ENCODE measurements at regions of chr6 and their contacts with region 1.

Region 1: GRCh38 chr6:33172688-33173534 is 19.4 kb downstream of the COL11A2 start:
- DNase-seq: peak; percentile 60
- H3K4me3 Mint-ChIP-seq: no peak overlapping the region
- H3K27ac Mint-ChIP-seq: no peak overlapping the region
- H3K4me1 Mint-ChIP-seq: no peaks in the 10 kb centered on the region
- H3K27me3 Mint-ChIP-seq: peaks cover 24% of the 10 kb centered on the region
- CTCF ChIP-seq: peak; percentile 73

Region 2: DNA sequence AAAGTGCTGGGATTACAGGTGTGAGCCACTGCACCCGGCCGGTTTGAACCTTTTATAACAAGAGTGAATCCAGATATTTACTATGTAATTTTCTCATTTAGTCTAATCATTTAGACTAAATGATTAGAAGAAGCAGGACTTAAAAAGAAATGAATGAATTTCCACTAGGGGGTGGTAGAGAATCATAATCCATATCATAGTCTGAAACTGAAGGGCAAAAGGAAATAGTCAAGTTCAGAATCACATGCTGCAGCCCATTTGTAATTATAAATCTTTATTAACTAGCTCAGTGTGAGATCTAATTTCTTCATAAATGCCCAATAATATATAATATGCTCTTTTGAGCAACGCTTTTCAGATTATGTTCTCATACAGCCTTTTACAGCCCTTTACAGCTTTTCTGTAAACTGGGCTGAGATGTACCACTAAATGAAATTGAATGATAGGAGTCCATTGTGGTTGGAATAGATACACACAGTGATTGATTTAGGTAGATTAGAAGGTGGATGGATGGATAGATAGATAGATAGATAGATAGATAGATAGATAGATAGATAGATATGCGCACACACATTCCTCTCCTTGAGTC is 287.1 kb before region 1 on chr6:
- CTCF ChIA-PET with region 1: no interaction called
- POLR2A ChIA-PET with region 1: no interaction called
- intact Hi-C with region 1: no loop called
- DNase-seq: peak; percentile 74
- H3K4me3 Mint-ChIP-seq: no peak overlapping the region
- H3K27ac Mint-ChIP-seq: no peak overlapping the region
- H3K4me1 Mint-ChIP-seq: peaks cover 11% of the 10 kb centered on the region
- H3K27me3 Mint-ChIP-seq: no peaks in the 10 kb centered on the region
- CTCF ChIP-seq: peak; percentile 56

Region 3: GRCh38 chr6:33014841-33015634 is 157.9 kb before region 1 on chr6:
- CTCF ChIA-PET with region 1: interaction called, 5 read pairs
- POLR2A ChIA-PET with region 1: no interaction called
- intact Hi-C with region 1: loop called (anchors 2 kb)
- DNase-seq: peak; percentile 72
- H3K4me3 Mint-ChIP-seq: no peak overlapping the region
- H3K27ac Mint-ChIP-seq: no peak overlapping the region
- H3K4me1 Mint-ChIP-seq: no peaks in the 10 kb centered on the region
- H3K27me3 Mint-ChIP-seq: peaks cover 98% of the 10 kb centered on the region
- CTCF ChIP-seq: peak; percentile 62

Region 4: GRCh38 chr6:33118525-33119123 is 54.3 kb before region 1 on chr6:
- CTCF ChIA-PET with region 1: interaction called, 8 read pairs
- POLR2A ChIA-PET with region 1: no interaction called
- intact Hi-C with region 1: loop called (anchors 2 kb)
- DNase-seq: peak; percentile 62
- H3K4me3 Mint-ChIP-seq: no peak overlapping the region
- H3K27ac Mint-ChIP-seq: no peak overlapping the region
- H3K4me1 Mint-ChIP-seq: no peaks in the 10 kb centered on the region
- H3K27me3 Mint-ChIP-seq: peaks cover 84% of the 10 kb centered on the region
- CTCF ChIP-seq: peak; percentile 53

Region 5: GRCh38 chr6:33161354-33162331 is 11.3 kb before region 1 on chr6:
- CTCF ChIA-PET with region 1: interaction called, 16 read pairs
- POLR2A ChIA-PET with region 1: no interaction called
- intact Hi-C with region 1: no loop called
- DNase-seq: peak; percentile 62
- H3K4me3 Mint-ChIP-seq: peak overlapping the region; percentile 85
- H3K27ac Mint-ChIP-seq: peak overlapping the region; percentile 88
- H3K4me1 Mint-ChIP-seq: peaks cover 12% of the 10 kb centered on the region
- H3K27me3 Mint-ChIP-seq: peaks cover 12% of the 10 kb centered on the region
- CTCF ChIP-seq: peak; percentile 93